ENCODE measurements at regions of chr13 and their contacts with region 1.

Region 1: GRCh38 chr13:44435142-44435982 is 61.7 kb downstream of the SERP2 start:
- DNase-seq: peak; percentile 91
- CTCF ChIP-seq: no peak

Region 2: DNA sequence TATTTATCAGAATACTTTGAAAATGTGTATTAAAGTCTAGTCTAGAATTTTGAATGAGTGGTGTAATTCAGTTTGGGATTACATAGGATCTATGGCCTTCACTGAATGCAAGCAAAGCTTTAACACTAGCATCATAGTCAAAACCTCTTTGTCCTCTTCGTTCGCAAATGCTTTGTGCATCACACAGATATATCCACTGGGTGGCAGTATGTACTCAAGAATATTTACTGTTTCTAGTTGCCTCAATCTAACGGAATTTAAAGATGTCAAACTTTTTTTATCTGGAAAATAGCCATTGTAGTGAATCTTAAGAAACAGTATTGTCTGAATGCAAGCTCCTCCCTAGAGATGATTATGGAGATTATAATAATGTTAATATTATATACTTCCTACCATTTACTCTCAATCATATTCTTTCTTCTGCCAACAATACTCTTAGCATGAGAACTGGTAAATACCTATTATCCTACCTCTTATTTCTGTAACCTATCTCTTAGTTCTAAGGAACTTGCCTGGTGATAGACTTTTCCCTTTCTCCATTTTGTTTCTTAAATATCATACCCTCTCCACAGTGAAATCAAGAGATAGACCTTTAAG is 529.8 kb before region 1 on chr13:
- in situ Hi-C with region 1: loop called (anchors 10 kb)
- DNase-seq: peak; percentile 62
- CTCF ChIP-seq: peak; percentile 71

Region 3: GRCh38 chr13:44050450-44051063 is 384.8 kb before region 1 on chr13:
- in situ Hi-C with region 1: loop called (anchors 10 kb)
- DNase-seq: peak; percentile 14
- CTCF ChIP-seq: peak; percentile 48

Region 4: GRCh38 chr13:44393391-44393790 is 42.0 kb before region 1 on chr13:
- in situ Hi-C with region 1: no loop called
- DNase-seq: no peak
- CTCF ChIP-seq: no peak